Heart left ventricle (tissue), 16 donors: ENCODE measurements at regions of chr22 and their contacts with region 1.

Region 1: DNA sequence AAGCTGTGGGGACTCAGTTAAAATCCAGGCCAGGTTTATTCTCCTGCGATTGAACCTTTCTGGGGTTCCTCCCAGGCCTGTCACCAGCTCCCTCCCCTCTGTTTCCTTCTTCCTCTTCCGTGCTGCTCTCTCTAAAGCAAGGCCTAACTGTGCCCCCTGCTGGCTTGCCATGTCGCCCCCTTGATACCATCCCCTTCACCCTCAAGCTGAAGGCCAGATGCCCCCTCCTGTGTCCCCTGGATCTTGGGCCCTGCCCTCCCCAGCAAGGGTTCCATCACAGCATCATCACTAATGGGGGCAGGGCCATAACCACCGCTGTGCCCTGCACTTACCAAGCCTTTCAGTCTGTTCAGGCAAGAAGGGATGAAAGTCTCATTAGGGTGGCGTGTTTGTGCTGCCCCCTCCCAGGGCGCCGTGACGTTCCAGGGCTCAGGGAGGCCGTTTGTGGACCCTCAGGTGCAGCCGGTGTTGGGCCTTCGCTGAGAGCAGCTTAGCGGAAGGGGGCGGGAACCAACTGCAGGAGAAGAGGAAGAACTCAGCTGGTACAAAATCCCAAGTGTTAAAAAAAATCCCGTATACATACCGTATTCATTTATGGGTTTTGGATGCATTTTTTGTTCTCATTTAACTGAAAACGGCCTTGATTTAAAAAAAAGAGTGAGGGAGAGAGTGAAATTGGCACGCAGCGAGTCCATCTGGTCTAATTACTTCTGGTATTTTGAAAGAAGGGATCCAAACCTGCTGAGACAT is 69.9 kb downstream of the MPPED1 start:
- DNase-seq: no peak
- ATAC-seq: no peak
- H3K4me3 ChIP-seq: peak overlapping the region in 2 of 12 donors; percentile 22 to 48
- H3K27ac ChIP-seq: no peak overlapping the region
- H3K4me1 ChIP-seq: no peaks in the 10 kb centered on the region
- H3K27me3 ChIP-seq: peaks cover 0 to 24% (median 0%) of the 10 kb centered on the region in 9 donors
- CTCF ChIP-seq: peak in 2 of 12 donors; percentile 8 to 10
- POLR2A ChIP-seq: no peak

Region 2: DNA sequence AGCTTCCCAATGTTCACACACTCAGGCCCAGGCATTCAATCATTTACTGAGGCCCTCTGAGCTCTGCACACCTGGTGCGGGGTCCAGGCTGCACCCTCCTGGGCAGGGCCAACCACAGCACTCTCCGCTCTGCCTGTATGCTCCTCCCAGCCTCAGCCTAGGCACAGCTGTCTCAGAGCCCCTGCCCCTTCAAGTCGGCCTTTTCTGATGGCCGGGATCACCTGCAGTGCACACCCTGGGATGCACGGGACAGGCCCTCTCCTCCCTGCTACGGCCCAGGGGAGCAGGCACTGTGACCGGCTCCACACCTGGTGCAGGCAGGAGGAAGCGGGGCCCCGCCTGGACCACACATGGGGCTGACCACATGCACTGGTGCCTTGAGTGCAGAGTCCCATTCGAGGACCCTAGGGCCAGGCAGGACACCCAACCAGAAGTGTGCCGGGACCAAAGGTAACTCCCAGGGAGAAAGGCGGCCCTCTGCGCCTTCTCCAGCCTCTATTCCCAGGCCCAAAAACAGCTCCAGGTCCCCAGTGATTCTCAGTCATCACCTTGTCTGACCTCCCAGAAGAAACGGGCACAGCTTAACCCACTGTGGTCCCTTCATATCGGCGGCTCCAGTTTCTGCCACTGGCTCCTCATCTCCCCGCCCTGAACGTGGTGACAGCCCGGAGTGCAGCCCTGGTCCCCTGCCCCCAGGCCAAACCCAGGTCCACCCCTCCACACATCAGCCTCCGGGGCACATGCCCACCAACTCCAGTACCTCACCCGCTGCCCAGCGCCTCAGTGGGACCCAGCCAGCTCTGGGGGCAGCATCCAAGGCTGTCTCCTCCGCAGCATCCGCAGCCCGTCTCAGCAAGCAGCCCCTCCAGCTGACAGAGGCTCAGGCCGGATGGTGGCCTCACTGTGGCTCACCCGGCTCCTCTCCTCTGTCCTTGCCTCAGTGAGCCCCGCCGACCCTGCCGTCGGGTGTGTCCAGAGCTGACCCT is 363.1 kb after region 1 on chr22:
- intact Hi-C with region 1: loop called in 1 of 10 experiments (anchors 5 kb)
- DNase-seq: peak in 2 of 5 donors; percentile 22 to 49
- ATAC-seq: no peak
- H3K4me3 ChIP-seq: no peak overlapping the region
- H3K27ac ChIP-seq: no peak overlapping the region
- H3K4me1 ChIP-seq: no peaks in the 10 kb centered on the region
- H3K27me3 ChIP-seq: peaks cover 0 to 3% (median 0%) of the 10 kb centered on the region in 9 donors
- CTCF ChIP-seq: no peak
- POLR2A ChIP-seq: no peak